ENCODE measurements at regions of chr17 and their contacts with region 1.

Region 1: GRCh38 chr17:13002766-13003451 is 14.9 kb downstream of the ELAC2 start:
- DNase-seq: peak; percentile 39 to 72
- ATAC-seq: peak; percentile 46 to 67 (median 61)
- H3K4me3 ChIP-seq: no peak overlapping the region
- H3K4me3 Mint-ChIP-seq: no peak overlapping the region
- H3K27ac ChIP-seq: no peak overlapping the region
- H3K27ac Mint-ChIP-seq: no peak overlapping the region
- H3K4me1 ChIP-seq: no peaks in the 10 kb centered on the region
- H3K4me1 Mint-ChIP-seq: peaks cover 4 to 7% of the 10 kb centered on the region in 2 donors
- H3K27me3 ChIP-seq: no peaks in the 10 kb centered on the region
- H3K27me3 Mint-ChIP-seq: no peaks in the 10 kb centered on the region
- CTCF ChIP-seq: peak; percentile 80

Region 2: DNA sequence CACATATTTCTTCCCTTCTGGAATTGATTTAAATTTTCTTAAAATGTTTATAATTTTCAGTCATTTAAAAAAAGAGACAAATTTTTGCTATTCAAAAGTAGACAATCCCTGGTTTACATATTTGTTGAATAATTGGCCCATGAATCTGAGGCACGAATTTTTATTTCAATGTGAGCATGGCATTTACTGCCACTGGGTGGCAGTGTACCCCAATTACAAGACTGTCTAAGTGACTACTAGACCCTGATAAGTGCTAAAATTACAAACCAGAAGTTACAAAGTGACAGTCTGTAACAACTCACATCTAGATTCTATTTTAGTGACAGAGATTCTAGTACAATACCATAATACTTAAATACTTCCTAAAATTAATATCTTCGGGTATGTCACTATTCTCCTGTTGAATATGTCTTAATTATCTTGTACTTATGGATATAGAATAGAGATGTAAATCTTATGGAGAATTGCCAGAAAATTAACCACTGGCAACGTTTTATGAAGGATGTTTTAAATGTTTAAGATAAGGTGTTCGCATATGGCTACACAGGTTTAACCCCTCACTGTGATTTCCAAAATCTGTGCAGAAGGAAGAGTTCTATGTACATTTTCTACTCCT is 746.4 kb before region 1 on chr17:
- intact Hi-C with region 1: loop called (anchors 5 kb)
- DNase-seq: peak in 1 of 2 donors; percentile 19
- ATAC-seq: no peak
- H3K4me3 ChIP-seq: no peak overlapping the region
- H3K4me3 Mint-ChIP-seq: no peak overlapping the region
- H3K27ac ChIP-seq: no peak overlapping the region
- H3K27ac Mint-ChIP-seq: no peak overlapping the region
- H3K4me1 ChIP-seq: no peaks in the 10 kb centered on the region
- H3K4me1 Mint-ChIP-seq: no peaks in the 10 kb centered on the region
- H3K27me3 ChIP-seq: no peaks in the 10 kb centered on the region
- H3K27me3 Mint-ChIP-seq: no peaks in the 10 kb centered on the region
- CTCF ChIP-seq: peak; percentile 37